ENCODE measurements at regions of chr9 and their contacts with region 1.

Region 1: DNA sequence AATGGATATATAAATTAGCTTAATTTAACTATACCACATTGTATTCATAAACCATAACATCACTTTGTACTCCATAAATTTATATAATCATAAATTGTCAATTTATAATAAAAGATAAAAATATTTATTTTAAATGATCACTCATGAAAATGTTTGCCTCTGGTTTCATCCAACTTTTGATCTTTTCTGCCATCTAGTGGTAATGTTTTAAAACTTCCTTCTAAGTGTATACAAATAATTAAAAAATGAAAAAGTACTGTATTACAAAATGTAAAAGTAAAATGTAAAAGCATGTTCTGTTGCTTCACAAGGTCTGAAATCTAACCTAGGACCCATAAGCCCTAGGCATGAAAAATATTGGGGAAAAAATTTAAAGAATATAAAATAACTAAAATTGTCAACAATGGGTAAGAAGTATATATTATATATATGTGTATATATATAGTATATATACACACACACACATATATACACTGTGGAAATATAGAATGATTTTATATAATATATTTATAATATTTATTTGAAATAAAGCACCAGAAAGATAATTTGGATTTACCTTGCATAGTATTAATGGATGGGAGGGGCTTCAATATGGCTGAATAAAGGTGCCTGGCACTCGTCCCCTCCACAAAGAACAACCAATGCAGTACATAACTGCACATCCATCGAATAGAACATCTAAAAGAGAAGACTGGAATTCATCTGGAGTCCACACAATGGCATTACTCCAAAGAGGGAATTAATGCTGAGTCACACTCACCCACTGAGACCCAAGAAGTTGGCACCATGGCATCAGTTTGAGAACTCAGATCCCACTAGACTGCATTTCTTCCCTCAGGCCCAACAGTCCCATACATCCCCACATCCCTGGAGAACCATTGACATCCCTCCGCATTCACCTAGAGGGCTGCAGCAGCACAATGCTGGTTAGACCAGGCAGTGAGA is 32.5 kb downstream of the ANXA1 start:
- DNase-seq: no peak
- H3K4me3 ChIP-seq: no peak overlapping the region
- CTCF ChIP-seq: peak; percentile 32

Region 2: GRCh38 chr9:72856972-72857623 is 327.1 kb before region 1 on chr9:
- in situ Hi-C with region 1: loop called (anchors 25 kb)
- DNase-seq: peak; percentile 65
- H3K4me3 ChIP-seq: no peak overlapping the region
- CTCF ChIP-seq: peak; percentile 69

Region 3: DNA sequence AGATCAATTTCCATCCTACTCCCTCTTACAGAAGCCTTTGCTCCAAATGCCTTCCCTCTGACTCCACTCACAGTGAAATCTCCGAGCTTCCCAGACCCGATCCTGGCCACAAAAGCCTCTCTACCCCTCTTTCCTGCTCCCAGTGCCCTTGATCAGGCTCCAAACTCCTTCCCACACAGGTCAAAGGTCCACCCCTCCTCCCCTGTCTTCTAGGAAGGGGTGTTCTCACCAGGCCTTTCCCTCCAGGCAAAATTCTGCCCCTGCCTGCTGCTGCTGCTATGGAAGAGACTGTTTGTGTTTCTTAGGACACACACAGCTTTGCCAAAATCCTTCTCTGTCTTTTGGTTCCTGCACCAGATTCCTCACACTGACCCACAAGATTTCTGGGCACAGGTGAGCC is 145.6 kb before region 1 on chr9:
- in situ Hi-C with region 1: no loop called
- DNase-seq: peak; percentile 41
- H3K4me3 ChIP-seq: no peak overlapping the region
- CTCF ChIP-seq: no peak

Region 4: DNA sequence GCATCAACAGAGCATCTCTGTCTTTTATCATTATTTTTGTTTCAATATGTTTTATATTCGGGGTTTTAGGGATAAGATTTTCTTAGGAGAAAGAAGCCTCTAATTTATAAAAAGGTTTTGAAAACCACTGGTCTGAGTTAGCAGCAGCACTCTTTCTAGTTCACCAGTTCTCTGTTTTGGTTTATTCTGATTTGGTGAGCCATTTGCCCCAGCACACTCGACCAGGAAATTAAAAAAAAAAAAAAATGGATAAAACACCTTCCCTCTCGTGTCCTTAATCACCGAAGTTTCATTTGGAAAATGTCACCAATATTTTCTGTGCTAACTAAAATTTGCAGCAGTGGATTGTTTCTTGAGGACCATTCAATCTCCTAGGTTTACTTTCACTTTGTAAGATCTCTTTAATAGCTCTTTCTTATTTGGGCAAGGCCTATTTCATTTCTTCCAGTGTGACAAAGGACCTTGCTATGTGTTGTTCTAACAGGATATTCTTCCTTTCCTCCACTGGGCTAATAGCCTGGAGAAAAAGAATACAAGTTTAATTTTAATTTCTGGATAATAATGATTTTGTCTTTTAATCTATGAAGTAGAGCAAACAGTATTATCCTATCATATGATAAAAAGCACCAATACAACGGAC is 90.3 kb before region 1 on chr9:
- in situ Hi-C with region 1: no loop called
- DNase-seq: peak; percentile 38
- H3K4me3 ChIP-seq: no peak overlapping the region
- CTCF ChIP-seq: no peak